ENCODE measurements at regions of chr15 and their contacts with region 1.

Region 1: DNA sequence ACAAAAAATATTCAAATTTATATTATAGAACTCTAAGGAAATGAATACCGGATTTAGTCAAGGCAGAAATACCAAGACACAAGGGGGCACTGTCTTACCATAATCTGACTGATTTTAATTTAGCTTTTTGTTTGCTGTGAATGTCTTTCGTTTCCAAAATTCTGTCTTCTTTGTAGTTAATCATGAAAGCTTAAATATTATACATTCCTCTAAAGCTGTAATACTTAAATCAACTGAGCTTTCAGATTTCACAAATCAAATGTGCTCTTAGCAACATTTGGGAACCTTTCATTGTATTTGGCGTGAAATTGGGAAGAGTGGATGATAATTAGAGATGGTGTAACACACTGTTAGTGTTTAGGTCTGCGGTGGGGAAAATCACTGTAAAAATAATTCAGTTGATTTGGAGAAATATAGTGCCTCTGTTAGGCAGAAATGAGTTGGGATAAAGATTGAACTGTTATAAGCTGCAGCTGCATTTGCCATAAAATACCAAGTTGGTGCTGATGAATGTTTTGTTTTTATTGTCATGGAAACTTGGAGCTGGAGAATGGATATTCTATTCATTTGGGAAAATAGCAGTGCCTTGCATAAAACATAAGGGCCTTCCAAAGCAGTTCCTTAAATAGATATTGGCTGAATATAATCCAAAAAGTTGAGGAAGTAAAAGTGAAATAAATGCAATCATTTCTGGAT is 228.2 kb downstream of the TCF12 start:
- DNase-seq: peak in 1 of 2 donors; percentile 57
- ATAC-seq: peak in 7 of 8 donors; percentile 39 to 76 (median 65)
- H3K4me3 ChIP-seq: peak overlapping the region in 7 of 10 donors; percentile 9 to 43 (median 33)
- H3K27ac ChIP-seq: peak overlapping the region in 7 of 10 donors; percentile 36 to 62 (median 54)
- H3K4me1 ChIP-seq: peaks cover 0 to 53% (median 44%) of the 10 kb centered on the region in 9 donors
- H3K27me3 ChIP-seq: no peaks in the 10 kb centered on the region
- CTCF ChIP-seq: peak; percentile 55 to 88 (median 82)

Region 2: DNA sequence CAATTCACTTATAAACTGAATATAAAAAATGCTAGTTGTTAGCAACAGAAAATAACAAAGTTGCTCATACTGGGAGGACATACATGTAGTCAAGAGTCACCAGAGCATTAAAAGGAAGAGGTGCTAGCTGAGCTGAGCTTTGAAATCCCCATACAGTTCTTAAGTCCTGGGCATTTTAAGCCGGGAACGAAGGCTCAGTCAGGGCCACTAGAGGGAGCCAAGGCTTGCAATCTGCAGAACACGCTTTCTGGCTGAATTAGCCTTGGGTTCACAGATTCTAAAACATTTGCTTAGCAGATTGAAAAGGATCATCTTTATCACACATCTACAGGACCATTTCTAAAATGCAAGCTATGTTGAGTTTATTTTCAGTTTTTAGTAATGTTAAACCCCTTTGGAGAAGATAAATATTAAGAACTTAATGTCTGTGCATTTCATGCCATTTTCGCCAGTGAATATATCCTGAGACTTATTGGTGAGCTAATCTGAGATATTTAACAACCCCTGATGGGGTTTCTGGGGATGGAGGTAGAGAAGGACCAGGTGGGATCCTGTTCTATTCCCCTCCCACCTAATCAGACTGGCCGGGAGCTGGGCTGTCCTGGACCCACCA is 655.4 kb before region 1 on chr15:
- intact Hi-C with region 1: loop called in 1 of 10 experiments (anchors 10 kb)
- DNase-seq: peak; percentile 26 to 27
- ATAC-seq: peak in 3 of 8 donors; percentile 56 to 82 (median 69)
- H3K4me3 ChIP-seq: no peak overlapping the region
- H3K27ac ChIP-seq: no peak overlapping the region
- H3K4me1 ChIP-seq: no peaks in the 10 kb centered on the region
- H3K27me3 ChIP-seq: peaks cover 0 to 9% (median 0%) of the 10 kb centered on the region in 7 donors
- CTCF ChIP-seq: peak; percentile 51 to 91 (median 80)

Region 3: GRCh38 chr15:56821721-56822425 is 324.8 kb before region 1 on chr15:
- intact Hi-C with region 1: loop called in 7 of 10 experiments (anchors 5 to 10 kb)
- DNase-seq: peak; percentile 40 to 48
- ATAC-seq: peak in 7 of 8 donors; percentile 67 to 89 (median 86)
- H3K4me3 ChIP-seq: no peak overlapping the region
- H3K27ac ChIP-seq: no peak overlapping the region
- H3K4me1 ChIP-seq: peaks cover 0 to 26% (median 14%) of the 10 kb centered on the region in 9 donors
- H3K27me3 ChIP-seq: no peaks in the 10 kb centered on the region
- CTCF ChIP-seq: peak; percentile 45 to 78 (median 68)

Region 4: DNA sequence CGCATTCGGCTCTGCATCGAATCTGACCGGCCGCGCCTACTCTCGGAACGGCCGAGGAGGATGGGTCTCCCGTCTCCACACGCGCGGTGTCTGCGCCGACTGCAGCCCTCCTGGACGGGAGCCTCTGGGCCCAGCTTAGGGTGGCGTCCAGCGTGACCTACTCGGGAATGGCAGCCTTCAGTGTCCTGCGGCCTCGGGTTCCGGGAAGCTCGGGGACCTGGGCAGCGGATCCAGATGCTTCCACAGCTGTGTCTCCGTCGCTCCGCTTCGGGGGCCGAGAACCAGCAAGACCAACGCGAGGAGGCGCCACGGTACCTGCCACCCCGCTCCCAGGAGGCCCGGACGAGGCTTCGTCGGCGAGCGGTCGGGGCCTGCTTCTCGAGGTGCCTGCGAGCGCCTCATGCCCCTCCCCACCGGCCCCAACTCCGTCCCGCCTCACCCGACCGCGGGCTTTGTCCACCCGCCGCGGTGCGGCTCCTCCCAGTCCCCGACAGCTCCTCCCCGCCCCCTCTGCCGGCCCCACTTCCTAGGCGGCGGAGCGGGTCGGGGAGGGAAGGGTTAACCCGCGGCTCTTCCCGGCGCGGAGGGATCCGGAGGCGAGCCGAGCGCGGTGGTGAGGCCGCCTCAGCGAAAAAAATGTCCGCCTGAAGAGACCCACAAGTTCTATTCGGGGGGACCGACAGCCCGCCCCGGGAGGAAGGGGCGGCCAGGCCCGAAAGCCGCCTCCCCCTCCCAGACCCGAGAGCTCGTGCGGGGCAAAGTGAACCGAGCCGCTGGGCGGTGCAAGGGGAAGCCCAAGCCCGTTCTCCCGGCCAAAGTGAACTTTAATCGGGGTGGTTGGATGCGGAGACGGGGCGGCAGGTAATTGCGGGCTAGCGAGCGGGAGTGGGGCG is 228.4 kb before region 1 on chr15 and contains the start of gene TCF12:
- intact Hi-C with region 1: loop called in 1 of 10 experiments (anchors 10 kb)
- DNase-seq: peak; percentile 96
- ATAC-seq: peak; percentile 95 to 98 (median 97)
- H3K4me3 ChIP-seq: peak within 1 kb of the TSS; percentile 84 to 97 (median 91)
- H3K27ac ChIP-seq: peak within 1 kb of the TSS; percentile 93 to 98 (median 98)
- H3K4me1 ChIP-seq: peaks cover 3 to 68% (median 60%) of the 10 kb centered on the region in 9 donors
- H3K27me3 ChIP-seq: no peaks in the 10 kb centered on the region
- CTCF ChIP-seq: peak in 8 of 9 donors; percentile 22 to 67 (median 51)
- total RNA-seq, gene TCF12: 29.2 to 55.7 (median 39.4) TPM

Region 5: DNA sequence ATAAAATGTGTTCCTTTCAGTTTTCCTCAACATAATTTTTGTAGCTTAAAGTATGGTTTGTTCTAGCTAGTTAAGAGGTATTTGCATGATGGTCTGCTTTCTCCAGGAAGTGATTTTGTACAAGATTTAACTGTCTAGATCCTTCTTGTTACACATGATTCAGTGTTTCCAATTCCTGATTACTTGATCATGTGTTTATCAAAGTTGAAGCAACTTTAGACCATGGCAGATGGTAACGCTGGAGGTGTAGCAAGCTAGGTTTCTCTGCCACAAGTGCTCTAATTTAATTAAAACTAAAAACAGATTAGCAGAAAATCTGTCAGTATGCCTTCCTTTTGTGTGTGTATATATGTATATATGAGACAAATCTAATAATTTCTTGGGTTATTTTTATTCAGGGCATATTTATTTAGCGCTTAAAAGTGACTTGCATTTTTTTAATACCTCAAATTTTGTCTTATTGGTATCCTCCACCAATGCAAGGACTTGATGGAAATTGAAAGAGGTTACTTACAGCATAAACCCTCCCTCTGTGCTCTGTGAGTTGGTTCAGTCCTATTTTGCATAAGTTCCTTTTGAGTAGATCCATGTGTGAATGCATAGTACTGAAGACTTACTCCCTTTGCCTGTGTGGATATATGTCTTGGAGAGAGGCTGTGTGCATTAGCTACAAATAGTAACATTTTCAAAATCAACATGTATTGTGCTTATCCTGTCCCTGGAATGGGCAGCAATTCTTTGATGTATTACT is 72.3 kb after region 1 on chr15:
- intact Hi-C with region 1: loop called in 9 of 10 experiments (anchors 2 to 10 kb)
- DNase-seq: no peak
- ATAC-seq: peak in 3 of 8 donors; percentile 33 to 48 (median 38)
- H3K4me3 ChIP-seq: peak overlapping the region in 6 of 10 donors; percentile 20 to 36 (median 32)
- H3K27ac ChIP-seq: peak overlapping the region in 3 of 10 donors; percentile 2 to 16 (median 15)
- H3K4me1 ChIP-seq: peaks cover 0 to 75% (median 43%) of the 10 kb centered on the region in 9 donors
- H3K27me3 ChIP-seq: no peaks in the 10 kb centered on the region
- CTCF ChIP-seq: no peak

Region 6: DNA sequence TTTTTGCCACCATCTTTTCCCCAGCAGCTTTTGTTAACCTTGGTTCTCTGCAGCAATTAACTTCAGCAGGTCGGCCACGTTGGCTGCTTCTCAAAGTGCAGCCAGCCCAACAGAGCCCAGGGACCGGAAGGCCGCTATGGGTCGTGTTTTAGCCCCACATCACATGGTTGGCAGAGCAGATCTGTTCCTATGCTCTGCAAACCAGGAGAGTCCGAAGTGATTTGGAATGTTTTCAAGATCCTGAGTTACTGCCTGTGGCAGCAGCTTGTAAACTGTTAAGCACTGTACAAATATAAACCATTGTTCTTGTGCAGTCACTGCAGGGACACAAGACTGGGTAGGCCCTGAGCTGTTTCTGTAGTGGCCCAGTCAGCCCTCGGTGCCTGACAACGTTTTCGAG is 375.5 kb after region 1 on chr15:
- intact Hi-C with region 1: loop called in 6 of 10 experiments (anchors 5 to 10 kb)
- DNase-seq: peak in 1 of 2 donors; percentile 31
- ATAC-seq: peak; percentile 26 to 89 (median 79)
- H3K4me3 ChIP-seq: no peak overlapping the region
- H3K27ac ChIP-seq: peak overlapping the region in 8 of 10 donors; percentile 26 to 72 (median 59)
- H3K4me1 ChIP-seq: peaks cover 0 to 38% (median 3%) of the 10 kb centered on the region in 9 donors
- H3K27me3 ChIP-seq: no peaks in the 10 kb centered on the region
- CTCF ChIP-seq: no peak

Region 7: GRCh38 chr15:57537072-57537471 is 390.4 kb after region 1 on chr15:
- intact Hi-C with region 1: loop called in 1 of 10 experiments (anchors 10 kb)
- DNase-seq: no peak
- ATAC-seq: peak in 4 of 8 donors; percentile 28 to 51 (median 45)
- H3K4me3 ChIP-seq: no peak overlapping the region
- H3K27ac ChIP-seq: no peak overlapping the region
- H3K4me1 ChIP-seq: peaks cover 4 to 45% (median 26%) of the 10 kb centered on the region in 9 donors
- H3K27me3 ChIP-seq: no peaks in the 10 kb centered on the region
- CTCF ChIP-seq: no peak